HepG2 (cell line): ENCODE measurements at regions of chr2 and their contacts with region 1.

Region 1: DNA sequence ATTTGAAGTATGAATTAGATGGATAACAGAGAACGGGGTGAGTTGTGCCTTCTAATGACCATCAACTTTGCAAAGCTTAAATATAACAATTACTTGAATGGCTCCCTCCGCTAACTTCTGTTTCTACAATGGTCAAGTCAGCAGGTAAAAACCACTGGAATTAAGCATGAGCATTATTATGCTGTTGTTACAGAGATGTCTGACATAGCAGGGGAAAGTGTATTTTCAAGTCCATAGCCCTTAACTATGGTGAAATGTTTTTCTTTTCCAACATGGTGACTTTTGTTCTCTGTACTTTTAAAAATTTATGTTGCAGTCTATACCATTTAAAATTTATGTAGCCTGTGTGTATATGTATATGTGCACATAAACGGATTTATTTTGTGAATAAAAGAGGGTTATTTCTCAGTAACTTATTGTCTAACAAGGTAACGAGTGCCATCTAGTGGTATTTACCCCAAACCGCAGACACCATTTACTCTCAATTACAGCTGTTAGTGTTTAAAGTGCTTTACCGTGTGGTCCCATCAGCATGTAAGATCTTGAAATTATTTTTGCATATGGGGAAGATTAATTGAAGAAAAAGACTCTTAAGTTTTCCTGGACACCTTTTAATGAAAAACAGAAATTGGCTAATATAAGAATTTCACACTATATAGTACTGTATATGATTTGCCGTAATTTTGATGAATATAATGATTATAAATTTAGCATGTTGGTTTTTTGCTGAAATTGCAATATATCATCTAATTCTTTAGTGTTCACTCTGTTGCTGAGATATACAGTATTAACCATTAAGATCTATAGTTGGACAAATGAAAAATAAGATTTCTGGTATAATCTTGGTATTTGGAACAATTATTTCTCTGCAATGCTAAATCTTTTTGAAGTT is 78.2 kb downstream of the UBE2E3 start:
- DNase-seq: peak; percentile 60
- ATAC-seq: peak; percentile 81
- H3K4me3 ChIP-seq: no peak overlapping the region
- H3K27ac ChIP-seq: no peak overlapping the region
- H3K4me1 ChIP-seq: no peaks in the 10 kb centered on the region
- H3K27me3 ChIP-seq: no peaks in the 10 kb centered on the region
- CTCF ChIP-seq: peak; percentile 84
- EP300 ChIP-seq: no peak
- POLR2A ChIP-seq: no peak
- RAD21 ChIP-seq: peak; percentile 76

Region 2: DNA sequence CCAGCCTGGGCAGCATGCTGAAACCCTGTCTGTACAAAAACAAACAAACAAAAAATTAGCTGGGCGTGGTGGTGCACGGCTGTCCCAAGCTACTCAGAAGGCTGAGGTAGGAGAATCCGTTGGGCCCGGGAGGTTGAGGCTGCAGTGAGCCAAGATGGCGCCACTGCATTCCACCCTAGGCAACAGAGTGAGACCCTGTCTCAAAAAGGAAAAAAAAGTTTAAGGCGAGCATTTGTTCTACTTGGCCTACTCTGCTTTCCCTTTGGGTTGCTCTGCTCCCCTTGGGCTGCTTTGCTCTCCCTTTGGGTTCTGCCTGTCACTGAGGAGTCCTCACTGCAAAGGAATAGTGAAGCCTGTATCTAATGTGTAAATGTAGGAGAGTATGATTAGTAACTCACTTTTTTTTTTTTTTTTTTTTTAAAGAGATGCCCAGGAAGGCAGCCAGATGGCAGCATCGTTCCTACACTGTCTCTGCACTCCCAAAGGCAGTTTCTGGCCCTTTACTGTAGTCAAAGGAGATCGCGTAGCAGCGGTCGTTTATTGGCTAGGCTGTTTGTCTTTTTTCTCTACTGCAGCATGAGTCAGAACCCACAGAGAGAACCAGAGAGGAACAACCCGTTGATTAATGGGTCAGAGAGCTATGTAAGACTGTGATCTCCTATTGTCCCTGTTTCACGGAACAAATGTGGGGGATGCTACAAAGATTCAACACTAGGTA is 933.2 kb before region 1 on chr2:
- CTCF ChIA-PET with region 1: interaction called, 29 read pairs
- POLR2A ChIA-PET with region 1: no interaction called
- in situ Hi-C with region 1: loop called (anchors 5 kb)
- intact Hi-C with region 1: loop called (anchors 1 kb)
- DNase-seq: peak; percentile 78
- ATAC-seq: peak; percentile 96
- H3K4me3 ChIP-seq: no peak overlapping the region; a peak in 1 of 6 replicates
- H3K27ac ChIP-seq: no peak overlapping the region
- H3K4me1 ChIP-seq: peaks cover 5% of the 10 kb centered on the region; the same call in 1 of the 2 replicates
- H3K27me3 ChIP-seq: no peaks in the 10 kb centered on the region
- CTCF ChIP-seq: peak; percentile 67
- EP300 ChIP-seq: no peak
- POLR2A ChIP-seq: no peak
- RAD21 ChIP-seq: 0 out of 2 replicates have a peak, but pooled peaks have one; percentile 20

Region 3: DNA sequence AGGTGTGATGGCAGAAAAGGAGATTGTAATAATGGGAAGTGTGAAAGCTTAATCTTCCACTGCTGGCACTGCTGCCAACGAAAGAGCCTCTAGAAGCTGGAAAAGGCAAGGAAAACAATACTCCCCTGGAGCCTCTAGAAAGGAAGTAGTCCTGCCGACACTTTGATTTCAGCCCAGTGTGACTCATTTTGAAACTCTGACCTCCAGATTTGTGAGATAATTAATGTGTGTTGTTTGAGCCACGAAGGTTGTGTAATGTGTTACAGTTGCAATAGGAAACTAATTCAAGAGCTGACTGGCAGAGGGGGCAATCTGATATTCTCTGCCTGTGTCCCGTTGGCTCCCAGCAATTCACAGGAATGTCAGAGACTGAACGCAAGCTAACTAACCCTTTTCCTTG is 297.4 kb before region 1 on chr2:
- CTCF ChIA-PET with region 1: no interaction called
- POLR2A ChIA-PET with region 1: no interaction called
- in situ Hi-C with region 1: no loop called
- intact Hi-C with region 1: loop called (anchors 10 kb)
- DNase-seq: peak; percentile 89
- ATAC-seq: peak; percentile 81
- H3K4me3 ChIP-seq: no peak overlapping the region
- H3K27ac ChIP-seq: no peak overlapping the region
- H3K4me1 ChIP-seq: peaks cover 57% of the 10 kb centered on the region
- H3K27me3 ChIP-seq: no peaks in the 10 kb centered on the region
- CTCF ChIP-seq: no peak
- EP300 ChIP-seq: peak; percentile 44 to 80; a peak in 2 of 4 replicates
- POLR2A ChIP-seq: no peak
- RAD21 ChIP-seq: no peak

Region 4: GRCh38 chr2:180901331-180901730 is 157.3 kb before region 1 on chr2:
- CTCF ChIA-PET with region 1: no interaction called
- POLR2A ChIA-PET with region 1: no interaction called
- in situ Hi-C with region 1: no loop called
- intact Hi-C with region 1: loop called (anchors 1 kb)
- DNase-seq: no peak
- ATAC-seq: 0 out of 3 replicates have a peak, but pooled peaks have one; percentile 36
- H3K4me3 ChIP-seq: no peak overlapping the region
- H3K27ac ChIP-seq: no peak overlapping the region
- H3K4me1 ChIP-seq: no peaks in the 10 kb centered on the region
- H3K27me3 ChIP-seq: no peaks in the 10 kb centered on the region
- CTCF ChIP-seq: no peak
- EP300 ChIP-seq: no peak
- POLR2A ChIP-seq: no peak
- RAD21 ChIP-seq: no peak